SK-N-SH (cell line): ENCODE measurements at regions of chr5 and their contacts with region 1.

Region 1: DNA sequence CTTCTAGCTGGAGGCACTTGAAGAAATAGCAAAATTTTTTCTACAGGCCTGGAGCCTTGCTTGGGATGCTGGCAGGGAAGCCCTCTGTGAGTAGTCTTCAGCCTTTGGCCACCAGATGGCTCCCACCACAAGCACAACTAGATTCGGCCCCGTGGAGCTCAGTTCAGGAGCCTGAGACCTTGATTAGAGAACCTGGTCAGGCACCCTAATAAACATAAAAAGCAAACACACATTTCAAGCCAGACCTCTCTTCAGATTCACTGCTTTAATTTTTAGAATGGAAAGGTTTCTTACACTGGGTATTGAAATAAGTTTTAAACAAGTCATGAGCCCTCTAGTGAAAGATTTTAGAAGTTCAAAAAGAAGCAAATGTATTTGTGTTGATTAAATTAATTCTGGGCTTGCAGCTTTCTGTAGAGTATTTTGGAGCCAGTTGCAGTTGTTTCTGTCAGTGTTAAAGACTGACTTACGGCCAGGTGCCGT is 41.4 kb downstream of the GLRX start:
- DNase-seq: peak; percentile 68
- H3K4me3 ChIP-seq: peak overlapping the region in 1 of 2 experiments; percentile 17; a peak in 1 of 4 replicates
- H3K27ac ChIP-seq: no peak overlapping the region
- H3K4me1 ChIP-seq: peaks cover 4 to 7% of the 10 kb centered on the region in 2 experiments; a peak in 2 of 4 replicates
- H3K27me3 ChIP-seq: no peaks in the 10 kb centered on the region
- CTCF ChIP-seq: peak; percentile 99
- EP300 ChIP-seq: no peak
- RAD21 ChIP-seq: peak; percentile 84

Region 2: GRCh38 chr5:95664204-95664786 is 116.8 kb before region 1 on chr5:
- CTCF ChIA-PET with region 1: interaction called, 26 read pairs
- POLR2A ChIA-PET with region 1: no interaction called
- DNase-seq: no peak
- H3K4me3 ChIP-seq: no peak overlapping the region; a peak in 1 of 4 replicates
- H3K27ac ChIP-seq: peak overlapping the region; percentile 6 to 34; a peak in 3 of 4 replicates
- H3K4me1 ChIP-seq: peaks cover 0 to 11% of the 10 kb centered on the region in 2 experiments; a peak in 3 of 4 replicates
- H3K27me3 ChIP-seq: no peaks in the 10 kb centered on the region
- CTCF ChIP-seq: peak; percentile 94
- EP300 ChIP-seq: no peak
- RAD21 ChIP-seq: peak; percentile 76

Region 3: GRCh38 chr5:95709967-95710685 is 71.0 kb before region 1 on chr5:
- CTCF ChIA-PET with region 1: no interaction called
- POLR2A ChIA-PET with region 1: no interaction called
- DNase-seq: no peak
- H3K4me3 ChIP-seq: no peak overlapping the region
- H3K27ac ChIP-seq: no peak overlapping the region
- H3K4me1 ChIP-seq: peaks cover 4 to 6% of the 10 kb centered on the region in 2 experiments; a peak in 2 of 4 replicates
- H3K27me3 ChIP-seq: no peaks in the 10 kb centered on the region
- CTCF ChIP-seq: no peak
- EP300 ChIP-seq: no peak
- RAD21 ChIP-seq: no peak

Region 4: GRCh38 chr5:95760273-95761191 is 20.6 kb before region 1 on chr5:
- CTCF ChIA-PET with region 1: interaction called, 28 read pairs
- POLR2A ChIA-PET with region 1: no interaction called
- DNase-seq: no peak
- H3K4me3 ChIP-seq: peak overlapping the region; percentile 33 to 52; a peak in 3 of 4 replicates
- H3K27ac ChIP-seq: peak overlapping the region; percentile 77 to 88
- H3K4me1 ChIP-seq: peaks cover 33 to 40% of the 10 kb centered on the region in 2 experiments; a peak in 3 of 4 replicates
- H3K27me3 ChIP-seq: no peaks in the 10 kb centered on the region
- CTCF ChIP-seq: no peak
- EP300 ChIP-seq: peak; percentile 16 to 86; a peak in 3 of 4 replicates
- RAD21 ChIP-seq: no peak

Region 5: DNA sequence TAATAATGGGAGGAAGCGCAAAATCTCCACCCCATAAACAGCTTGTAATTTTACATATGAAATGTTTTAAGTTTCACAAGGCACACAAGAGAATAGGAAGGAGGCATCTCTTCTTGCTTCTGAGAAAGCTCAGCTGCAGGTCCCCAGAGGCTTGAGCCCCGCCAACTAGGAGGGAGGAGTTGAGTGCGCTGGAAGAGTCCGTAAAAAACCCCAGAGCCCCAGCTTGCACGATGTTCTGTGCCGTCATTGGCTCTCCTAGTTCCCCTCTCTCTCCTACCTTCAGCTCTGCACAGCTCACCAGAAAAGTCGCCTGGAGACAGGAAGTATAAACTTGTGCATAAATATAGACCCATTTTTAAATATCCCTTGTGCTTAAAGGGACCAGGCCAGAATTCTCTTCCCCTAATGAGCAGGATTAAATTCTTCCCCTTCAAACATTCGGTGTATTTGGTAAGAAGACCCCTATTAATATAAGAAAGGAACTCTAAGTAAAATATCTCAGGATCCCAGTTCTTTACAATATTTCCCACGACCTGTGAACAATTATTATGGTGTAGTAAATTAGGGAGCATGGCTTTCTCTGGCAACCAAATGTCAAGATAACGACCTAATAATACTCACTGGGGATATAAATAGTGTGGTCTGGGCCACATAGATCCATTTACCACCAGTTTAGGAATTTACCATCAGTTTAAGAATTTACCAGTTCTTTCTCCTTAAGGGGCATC is 27.7 kb after region 1 on chr5:
- CTCF ChIA-PET with region 1: interaction called, 17 read pairs
- POLR2A ChIA-PET with region 1: no interaction called
- DNase-seq: no peak
- H3K4me3 ChIP-seq: no peak overlapping the region
- H3K27ac ChIP-seq: no peak overlapping the region
- H3K4me1 ChIP-seq: peaks cover 8 to 18% of the 10 kb centered on the region in 2 experiments; a peak in 3 of 4 replicates
- H3K27me3 ChIP-seq: no peaks in the 10 kb centered on the region
- CTCF ChIP-seq: no peak
- EP300 ChIP-seq: no peak
- RAD21 ChIP-seq: no peak

Region 6: DNA sequence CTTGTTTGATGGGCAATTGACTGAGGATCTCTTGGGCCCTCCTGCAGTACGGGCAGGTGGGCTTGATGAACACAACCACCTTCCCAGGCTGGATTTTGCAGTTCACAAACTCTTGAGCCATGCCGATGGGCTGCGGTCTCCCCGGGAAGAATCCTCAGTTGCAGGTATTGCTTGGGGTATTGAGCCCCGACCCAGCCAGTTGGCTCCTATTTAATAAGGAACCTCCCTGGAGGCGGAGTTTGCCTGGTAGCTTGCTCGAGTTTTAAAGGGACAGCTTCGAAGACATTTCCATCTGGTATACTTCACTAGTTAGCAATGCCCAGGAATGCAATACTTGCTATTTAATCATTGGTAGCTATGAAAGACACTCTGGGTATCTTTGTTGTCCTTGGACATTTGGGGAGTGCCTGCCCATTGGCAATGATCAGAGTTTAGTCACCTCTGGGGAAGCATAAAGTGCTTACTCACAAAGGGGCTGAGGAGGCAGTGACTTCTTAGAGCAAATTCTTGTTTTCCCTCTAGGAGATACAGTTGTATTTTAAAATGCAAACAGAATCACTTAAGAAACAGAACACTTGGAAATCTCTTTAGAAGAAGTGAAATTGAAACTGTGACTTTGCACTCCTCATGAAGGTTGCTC is 41.5 kb after region 1 on chr5 and contains the start of gene GLRX:
- CTCF ChIA-PET with region 1: interaction called, 28 read pairs
- POLR2A ChIA-PET with region 1: no interaction called
- DNase-seq: peak; percentile 63
- H3K4me3 ChIP-seq: peak within 1 kb of the TSS; percentile 72 to 90
- H3K27ac ChIP-seq: peak within 1 kb of the TSS; percentile 74 to 85
- H3K4me1 ChIP-seq: peaks cover 9 to 22% of the 10 kb centered on the region in 2 experiments
- H3K27me3 ChIP-seq: no peaks in the 10 kb centered on the region
- CTCF ChIP-seq: no peak
- EP300 ChIP-seq: no peak
- RAD21 ChIP-seq: no peak
- polyA plus RNA-seq, gene GLRX: 40.0 and 50.9 TPM in 2 replicates

Region 7: GRCh38 chr5:95846554-95847260 is 65.6 kb after region 1 on chr5:
- CTCF ChIA-PET with region 1: interaction called, 170 read pairs
- POLR2A ChIA-PET with region 1: interaction called, 5 read pairs
- DNase-seq: peak; percentile 83
- H3K4me3 ChIP-seq: no peak overlapping the region; a peak in 1 of 4 replicates
- H3K27ac ChIP-seq: no peak overlapping the region
- H3K4me1 ChIP-seq: peaks cover 3 to 7% of the 10 kb centered on the region in 2 experiments; a peak in 2 of 4 replicates
- H3K27me3 ChIP-seq: no peaks in the 10 kb centered on the region
- CTCF ChIP-seq: peak; percentile 97
- EP300 ChIP-seq: no peak
- RAD21 ChIP-seq: peak; percentile 98

Region 8: DNA sequence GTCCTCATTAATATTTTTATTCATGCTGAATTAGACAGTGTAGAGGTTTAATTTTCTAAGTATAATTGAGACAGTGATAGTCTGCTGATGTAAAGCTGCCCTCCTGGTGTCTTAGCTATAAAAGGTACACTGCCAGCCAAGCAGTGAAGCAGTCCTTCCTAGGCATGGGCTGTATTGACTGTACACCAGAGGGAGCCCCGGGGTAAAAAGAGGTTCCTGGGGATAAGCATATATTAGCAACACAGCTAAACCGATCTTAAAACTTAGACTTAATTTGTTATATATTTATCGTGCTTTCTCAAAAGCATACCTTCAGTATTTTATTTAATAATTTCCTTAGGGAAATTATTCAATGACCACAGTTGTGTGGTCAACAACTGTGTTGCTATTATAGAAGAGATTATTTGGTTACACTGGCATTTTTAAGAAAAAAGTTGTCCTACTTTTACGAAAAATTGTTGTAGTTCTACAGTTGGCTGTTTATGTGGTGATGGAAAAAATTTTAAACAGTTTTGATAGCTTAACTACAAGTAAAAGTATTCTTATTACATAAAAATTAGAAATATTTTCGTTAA is 111.7 kb after region 1 on chr5:
- CTCF ChIA-PET with region 1: no interaction called
- POLR2A ChIA-PET with region 1: no interaction called
- DNase-seq: peak; percentile 33
- H3K4me3 ChIP-seq: no peak overlapping the region
- H3K27ac ChIP-seq: no peak overlapping the region
- H3K4me1 ChIP-seq: peaks cover 0 to 2% of the 10 kb centered on the region in 2 experiments; a peak in 2 of 4 replicates
- H3K27me3 ChIP-seq: no peaks in the 10 kb centered on the region
- CTCF ChIP-seq: peak; percentile 57
- EP300 ChIP-seq: no peak
- RAD21 ChIP-seq: peak; percentile 56

Region 9: DNA sequence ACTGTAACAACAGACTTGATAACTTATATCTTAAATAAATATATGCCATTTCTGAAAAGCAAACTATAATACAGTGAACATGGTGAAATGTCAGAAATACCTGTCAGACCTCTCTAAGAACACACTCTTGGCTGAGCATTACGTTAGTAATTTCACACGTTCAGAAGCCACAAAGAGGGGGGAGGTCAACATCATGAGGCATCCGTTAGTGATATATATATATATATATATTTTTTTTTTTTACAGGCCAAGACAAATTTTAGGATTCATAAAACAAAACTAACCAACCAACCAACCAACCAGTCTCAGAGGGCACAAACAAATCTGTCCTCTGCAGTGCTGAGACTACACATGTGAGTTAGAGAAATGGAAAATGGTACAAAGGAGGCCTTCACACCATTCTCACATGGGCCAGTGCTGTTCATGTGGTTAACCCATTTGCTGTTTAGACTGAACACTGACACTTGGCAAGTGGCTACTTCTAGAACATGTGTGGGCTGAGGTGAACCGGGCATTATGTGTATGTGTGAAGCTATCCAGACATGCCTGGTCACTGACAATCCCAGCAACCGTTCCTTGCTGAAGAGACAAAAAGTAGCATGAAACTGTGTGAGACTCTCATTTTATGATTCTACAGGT is 126.0 kb after region 1 on chr5:
- CTCF ChIA-PET with region 1: no interaction called
- POLR2A ChIA-PET with region 1: no interaction called
- DNase-seq: no peak
- H3K4me3 ChIP-seq: no peak overlapping the region
- H3K27ac ChIP-seq: no peak overlapping the region
- H3K4me1 ChIP-seq: peaks cover 0 to 1% of the 10 kb centered on the region in 2 experiments; a peak in 2 of 4 replicates
- H3K27me3 ChIP-seq: no peaks in the 10 kb centered on the region
- CTCF ChIP-seq: no peak
- EP300 ChIP-seq: no peak
- RAD21 ChIP-seq: no peak

Region 10: GRCh38 chr5:96093890-96094381 is 312.8 kb after region 1 on chr5:
- CTCF ChIA-PET with region 1: no interaction called
- POLR2A ChIA-PET with region 1: no interaction called
- DNase-seq: no peak
- H3K4me3 ChIP-seq: no peak overlapping the region
- H3K27ac ChIP-seq: peak overlapping the region in 1 of 2 experiments; percentile 38; a peak in 2 of 4 replicates
- H3K4me1 ChIP-seq: peaks cover 0 to 21% of the 10 kb centered on the region in 2 experiments; a peak in 2 of 4 replicates
- H3K27me3 ChIP-seq: no peaks in the 10 kb centered on the region
- CTCF ChIP-seq: no peak
- EP300 ChIP-seq: no peak
- RAD21 ChIP-seq: no peak